H1 (cell line): ENCODE measurements at regions of chr4 and their contacts with region 1.

Region 1: DNA sequence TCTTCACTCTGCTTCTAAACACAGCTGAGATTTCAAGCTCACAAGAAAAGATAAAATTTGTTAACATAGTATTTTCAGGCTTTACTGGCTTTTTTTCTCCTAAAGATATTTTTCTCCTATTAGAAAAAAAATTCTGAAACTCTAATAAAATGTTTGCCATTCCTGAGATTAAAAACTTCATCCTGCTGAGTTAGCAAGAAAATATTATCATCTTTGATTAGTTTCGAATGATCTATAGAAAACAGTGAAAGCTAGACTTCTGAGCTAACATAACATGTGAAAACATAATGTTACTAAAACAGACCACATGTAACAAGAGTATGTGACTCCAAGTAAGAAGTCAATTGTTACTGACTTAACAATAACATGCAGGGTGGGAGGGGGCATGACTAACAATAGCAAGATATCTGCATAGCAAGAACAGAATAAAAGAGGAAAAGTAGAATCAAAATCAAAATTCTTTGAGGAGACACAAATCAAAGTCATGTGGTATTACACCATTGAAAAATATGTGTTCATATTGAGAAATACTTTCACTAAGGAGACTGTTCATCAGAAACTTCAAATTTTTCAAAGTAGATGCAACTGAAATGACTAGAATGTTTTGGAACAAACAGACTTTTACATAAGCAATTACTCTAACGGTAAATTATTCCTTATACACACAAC is 14.5 kb downstream of the TBCK start:
- DNase-seq: no peak
- H3K4me3 ChIP-seq: no peak overlapping the region
- H3K27ac ChIP-seq: no peak overlapping the region
- H3K4me1 ChIP-seq: peaks cover 0 to 8% (median 5%) of the 10 kb centered on the region in 4 experiments; a peak in 4 of 7 replicates
- H3K27me3 ChIP-seq: no peaks in the 10 kb centered on the region
- CTCF ChIP-seq: no peak
- EP300 ChIP-seq: no peak
- POLR2A ChIP-seq: no peak
- RAD21 ChIP-seq: no peak

Region 2: DNA sequence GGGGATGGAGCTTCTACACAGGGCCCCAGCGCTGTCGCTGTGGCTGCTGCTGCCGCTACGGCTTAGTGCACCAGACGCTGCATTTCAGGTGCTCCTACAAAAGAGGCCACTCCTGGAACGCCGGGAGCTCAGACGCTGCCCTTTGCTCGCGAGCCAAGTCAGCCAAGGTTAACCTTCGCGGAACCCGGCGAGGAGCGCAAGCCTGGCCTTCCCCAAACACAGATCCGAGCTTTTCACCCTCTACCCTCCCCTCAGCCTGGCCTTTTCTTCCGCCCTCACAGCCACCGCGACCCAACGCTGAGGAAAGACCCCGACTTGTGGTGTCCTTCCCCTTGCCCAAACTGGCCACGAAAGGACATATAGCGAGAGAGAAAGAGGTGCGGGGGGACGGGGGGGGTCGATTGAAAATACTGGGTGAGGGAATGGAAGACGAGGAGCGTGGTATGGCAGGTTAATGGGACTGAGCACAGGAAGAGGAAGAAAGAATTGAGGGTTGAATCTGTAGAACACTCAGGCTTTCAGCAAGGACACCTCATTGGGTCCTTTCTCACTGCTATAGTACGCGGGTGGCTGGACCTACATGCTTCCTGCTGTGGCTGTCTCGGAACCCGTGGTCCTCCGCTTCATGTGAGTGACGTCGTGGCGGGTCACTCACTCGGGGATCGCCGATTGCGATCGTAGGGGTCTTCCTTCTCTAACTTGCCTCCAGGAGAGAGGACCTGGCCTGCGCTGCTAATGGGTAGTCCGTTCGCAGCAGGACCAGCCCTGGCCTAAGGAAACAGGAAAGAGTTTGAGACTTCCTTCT is 14.6 kb after region 1 on chr4 and contains the starts of genes AIMP1 and TBCK:
- CTCF ChIA-PET with region 1: interaction called, 4 read pairs
- POLR2A ChIA-PET with region 1: interaction called, 13 read pairs
- DNase-seq: peak; percentile 75 to 90
- H3K4me3 ChIP-seq: peak within 1 kb of the TSS; percentile 88 to 100 (median 98)
- H3K27ac ChIP-seq: peak within 1 kb of the TSS; percentile 99
- H3K4me1 ChIP-seq: no peaks in the 10 kb centered on the region
- H3K27me3 ChIP-seq: no peaks in the 10 kb centered on the region
- CTCF ChIP-seq: no peak
- EP300 ChIP-seq: no peak
- POLR2A ChIP-seq: peak; percentile 91 to 98
- RAD21 ChIP-seq: no peak
- total RNA-seq, gene AIMP1: 49.9 and 54.6 TPM in 2 replicates
- total RNA-seq, gene TBCK: 16.0 and 18.7 TPM in 2 replicates

Region 3: GRCh38 chr4:106365613-106366012 is 64.1 kb after region 1 on chr4:
- CTCF ChIA-PET with region 1: no interaction called
- POLR2A ChIA-PET with region 1: no interaction called
- DNase-seq: no peak
- H3K4me3 ChIP-seq: no peak overlapping the region
- H3K27ac ChIP-seq: no peak overlapping the region
- H3K4me1 ChIP-seq: peaks cover 0 to 3% (median 0%) of the 10 kb centered on the region in 4 experiments; a peak in 1 of 7 replicates
- H3K27me3 ChIP-seq: no peaks in the 10 kb centered on the region
- CTCF ChIP-seq: no peak
- EP300 ChIP-seq: no peak
- POLR2A ChIP-seq: no peak
- RAD21 ChIP-seq: no peak